Mammary epithelial cell (primary cell): ENCODE measurements at regions of chr5 and their contacts with region 1.

Region 1: GRCh38 chr5:55868846-55869245 is 17.7 kb downstream of the IL31RA start:
- DNase-seq: peak; percentile 99
- H3K4me3 ChIP-seq: no peak overlapping the region
- H3K27ac ChIP-seq: peak overlapping the region; percentile 42
- H3K4me1 ChIP-seq: peaks cover 17% of the 10 kb centered on the region
- H3K27me3 ChIP-seq: no peaks in the 10 kb centered on the region
- CTCF ChIP-seq: no peak

Region 2: GRCh38 chr5:55853818-55854217 is 15.0 kb before region 1 on chr5:
- CTCF ChIA-PET with region 1: no interaction called
- dilution Hi-C with region 1: no loop called
- in situ Hi-C with region 1: no loop called
- intact Hi-C with region 1: loop called (anchors 1 kb)
- DNase-seq: no peak
- H3K4me3 ChIP-seq: peak overlapping the region in 2 of 3 experiments; percentile 11 to 12
- H3K27ac ChIP-seq: peak overlapping the region; percentile 56
- H3K4me1 ChIP-seq: peaks cover 29% of the 10 kb centered on the region
- H3K27me3 ChIP-seq: no peaks in the 10 kb centered on the region
- CTCF ChIP-seq: no peak

Region 3: DNA sequence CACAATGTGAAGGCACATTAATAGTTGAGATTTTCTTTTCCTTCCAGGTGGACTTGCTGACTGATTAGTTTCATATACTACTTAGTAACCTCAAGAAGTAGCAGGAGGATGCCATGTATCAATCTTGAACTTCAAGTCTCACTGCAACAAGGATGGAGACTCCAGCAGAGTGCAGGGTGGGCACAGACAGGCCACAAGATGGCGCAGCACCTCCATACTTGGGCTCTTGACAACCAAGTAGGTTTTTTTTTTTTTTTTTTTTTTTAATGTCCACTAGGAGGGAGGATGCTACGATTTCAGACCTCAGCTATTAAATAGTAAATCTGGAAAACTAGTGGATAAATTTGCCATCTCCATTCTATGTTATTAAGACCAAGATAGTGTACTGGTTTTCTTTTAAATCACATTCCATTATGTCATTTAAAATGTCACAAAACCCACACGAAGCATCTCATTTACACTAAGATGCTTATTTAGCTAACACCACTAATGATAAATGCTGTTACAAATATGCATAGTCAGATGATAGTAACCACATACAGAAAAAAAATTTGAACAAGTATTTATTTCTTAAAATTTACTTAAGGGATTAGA is 67.4 kb after region 1 on chr5:
- CTCF ChIA-PET with region 1: no interaction called
- dilution Hi-C with region 1: no loop called
- in situ Hi-C with region 1: no loop called
- intact Hi-C with region 1: no loop called
- DNase-seq: peak; percentile 63
- H3K4me3 ChIP-seq: no peak overlapping the region
- H3K27ac ChIP-seq: no peak overlapping the region
- H3K4me1 ChIP-seq: no peaks in the 10 kb centered on the region
- H3K27me3 ChIP-seq: no peaks in the 10 kb centered on the region
- CTCF ChIP-seq: peak; percentile 91 to 97